ENCODE measurements at regions of chr7 and their contacts with region 1.

Region 1: DNA sequence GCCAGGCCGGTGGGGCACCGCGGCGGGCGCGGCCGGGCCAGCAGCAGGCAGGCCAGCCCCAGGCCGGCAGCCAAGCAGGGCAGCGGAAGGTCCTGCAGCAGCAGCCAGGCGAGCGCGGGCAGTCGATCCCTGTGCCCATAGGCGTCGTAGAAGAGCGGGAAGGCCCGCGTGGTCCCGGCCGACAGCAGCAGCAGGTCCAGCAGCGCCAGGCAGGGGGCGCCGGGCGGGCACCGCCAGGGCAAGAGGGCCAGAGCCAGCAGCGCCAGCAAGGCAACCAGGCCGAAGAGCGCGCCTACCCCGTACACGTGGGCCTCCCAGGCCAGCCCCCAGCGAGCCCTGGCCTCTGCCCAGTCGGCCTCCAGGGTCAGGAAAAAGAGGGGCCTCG is 8.4 kb upstream of the RBM28 start:
- DNase-seq: no peak
- H3K4me3 ChIP-seq: no peak overlapping the region
- CTCF ChIP-seq: peak; percentile 64

Region 2: GRCh38 chr7:128381161-128381821 is 29.1 kb after region 1 on chr7:
- CTCF ChIA-PET with region 1: interaction called, 690 read pairs
- POLR2A ChIA-PET with region 1: interaction called, 9 read pairs
- DNase-seq: no peak
- H3K4me3 ChIP-seq: no peak overlapping the region
- CTCF ChIP-seq: peak; percentile 49

Measured in AG04449 (cell line).